Lower leg skin (tissue), 4 donors: ENCODE measurements at regions of chr12 and their contacts with region 1.

Region 1: GRCh38 chr12:110699591-110700445 is 10.9 kb upstream of the HVCN1 start:
- DNase-seq: peak in 1 of 2 donors; percentile 81
- H3K4me3 ChIP-seq: no peak overlapping the region
- CTCF ChIP-seq: no peak
- POLR2A ChIP-seq: no peak

Region 2: DNA sequence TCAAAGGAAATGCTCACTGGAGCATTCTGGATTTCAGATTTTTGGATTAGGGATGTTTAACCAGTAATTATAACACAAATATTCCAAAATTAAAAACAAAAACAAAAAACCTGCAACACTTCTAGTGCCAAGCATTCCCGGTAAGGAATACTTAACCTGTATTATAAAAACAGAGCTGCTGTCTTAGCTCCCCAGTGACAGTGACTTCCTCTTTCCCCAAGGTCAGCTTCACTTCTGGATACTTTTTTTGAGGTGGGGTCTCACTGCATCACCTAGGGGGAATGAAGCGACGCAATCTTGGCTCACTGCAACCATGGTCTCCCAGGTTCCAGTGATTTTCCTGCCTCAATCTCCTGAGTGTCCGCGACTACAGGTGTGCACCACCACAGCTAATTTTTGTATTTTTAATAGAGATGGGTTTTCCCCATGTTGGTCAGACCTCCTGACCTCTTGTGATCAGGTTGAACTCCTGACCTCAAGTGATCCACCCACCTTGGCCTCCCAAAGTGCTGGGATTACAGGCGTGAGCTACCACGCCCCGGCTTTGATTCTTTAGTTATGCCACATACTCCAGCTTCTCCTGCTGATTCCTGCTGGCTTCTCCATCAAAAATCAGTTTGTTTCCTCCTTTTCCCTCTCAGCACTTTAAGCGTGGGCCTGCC is 27.0 kb after region 1 on chr12:
- intact Hi-C with region 1: loop called (anchors 1 kb)
- DNase-seq: no peak
- H3K4me3 ChIP-seq: no peak overlapping the region
- CTCF ChIP-seq: no peak
- POLR2A ChIP-seq: no peak